ENCODE measurements at regions of chr16 and their contacts with region 1.

Region 1: GRCh38 chr16:24516900-24517669 is 22.3 kb upstream of the RBBP6 start:
- DNase-seq: peak; percentile 39
- ATAC-seq: peak; percentile 60
- H3K4me3 Mint-ChIP-seq: peak overlapping the region; percentile 24
- H3K27ac Mint-ChIP-seq: no peak overlapping the region
- H3K4me1 Mint-ChIP-seq: peaks cover 6% of the 10 kb centered on the region
- H3K27me3 Mint-ChIP-seq: peaks cover 3% of the 10 kb centered on the region
- CTCF ChIP-seq: peak; percentile 82

Region 2: GRCh38 chr16:24497406-24497805 is 19.7 kb before region 1 on chr16:
- CTCF ChIA-PET with region 1: no interaction called
- POLR2A ChIA-PET with region 1: no interaction called
- intact Hi-C with region 1: no loop called
- DNase-seq: no peak
- ATAC-seq: no peak
- H3K4me3 Mint-ChIP-seq: no peak overlapping the region
- H3K27ac Mint-ChIP-seq: no peak overlapping the region
- H3K4me1 Mint-ChIP-seq: no peaks in the 10 kb centered on the region
- H3K27me3 Mint-ChIP-seq: peaks cover 11% of the 10 kb centered on the region
- CTCF ChIP-seq: no peak

Region 3: DNA sequence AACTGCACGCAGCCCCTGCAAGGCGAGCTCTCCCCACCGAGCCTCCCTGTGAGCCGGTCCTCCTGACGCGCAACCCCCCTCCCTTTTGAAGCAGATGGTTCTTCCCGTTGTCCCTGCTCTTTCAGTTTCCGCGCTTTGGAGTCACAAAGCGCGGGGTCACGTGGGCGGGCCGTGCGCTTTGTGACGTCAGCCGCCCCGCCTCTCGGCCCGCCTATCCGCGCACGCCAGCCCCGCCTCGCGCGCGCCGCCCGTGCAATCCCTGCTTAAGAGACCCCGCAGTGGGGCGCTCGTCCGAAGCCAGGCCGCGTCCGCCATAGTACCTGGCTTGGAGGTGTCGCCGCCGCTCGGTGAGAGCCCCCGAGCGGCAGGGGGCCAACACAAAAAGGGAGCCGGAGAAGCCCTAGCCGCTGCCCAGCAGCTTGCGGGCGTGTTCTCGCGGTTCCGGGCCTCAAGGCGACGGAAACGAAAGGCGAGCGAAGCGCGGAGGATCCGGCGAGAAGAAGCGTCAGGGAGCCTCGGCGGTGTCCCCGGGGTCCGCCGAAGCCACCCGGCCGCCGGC is 22.3 kb after region 1 on chr16 and contains the start of gene RBBP6:
- CTCF ChIA-PET with region 1: interaction called, 8 read pairs
- POLR2A ChIA-PET with region 1: no interaction called
- intact Hi-C with region 1: loop called (anchors 2 kb)
- DNase-seq: peak; percentile 96
- ATAC-seq: peak; percentile 92
- H3K4me3 Mint-ChIP-seq: peak within 1 kb of the TSS; percentile 100
- H3K27ac Mint-ChIP-seq: peak within 1 kb of the TSS; percentile 100
- H3K4me1 Mint-ChIP-seq: peaks cover 43% of the 10 kb centered on the region
- H3K27me3 Mint-ChIP-seq: no peaks in the 10 kb centered on the region
- CTCF ChIP-seq: no peak
- total RNA-seq, gene RBBP6: 85.3 and 85.8 TPM in 2 replicates

Region 4: DNA sequence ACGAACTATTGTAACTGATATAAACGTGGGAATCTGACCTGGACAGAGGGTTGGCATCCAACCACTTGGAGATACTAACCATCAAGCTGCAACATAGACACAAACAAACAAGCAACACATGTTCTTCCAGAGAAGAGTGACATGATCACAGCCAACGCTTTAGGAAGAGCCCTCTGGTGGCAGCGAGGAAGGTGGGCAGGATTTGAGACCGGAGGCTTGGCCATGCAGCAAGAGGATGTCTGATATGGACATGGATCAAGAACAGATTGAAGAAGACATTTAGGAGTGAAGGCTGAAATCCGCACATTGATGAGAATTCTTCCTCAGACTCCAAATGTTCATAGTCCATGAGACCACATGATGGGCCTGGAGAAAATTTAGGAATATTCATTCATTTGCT is 172.1 kb after region 1 on chr16:
- CTCF ChIA-PET with region 1: no interaction called
- POLR2A ChIA-PET with region 1: no interaction called
- intact Hi-C with region 1: loop called (anchors 5 kb)
- DNase-seq: no peak
- ATAC-seq: no peak
- H3K4me3 Mint-ChIP-seq: no peak overlapping the region
- H3K27ac Mint-ChIP-seq: no peak overlapping the region
- H3K4me1 Mint-ChIP-seq: no peaks in the 10 kb centered on the region
- H3K27me3 Mint-ChIP-seq: peaks cover 5% of the 10 kb centered on the region
- CTCF ChIP-seq: no peak

Region 5: GRCh38 chr16:25224731-25225319 is 707.7 kb after region 1 on chr16:
- CTCF ChIA-PET with region 1: interaction called, 13 read pairs
- POLR2A ChIA-PET with region 1: no interaction called
- intact Hi-C with region 1: loop called (anchors 1 kb)
- DNase-seq: no peak
- ATAC-seq: no peak
- H3K4me3 Mint-ChIP-seq: no peak overlapping the region
- H3K27ac Mint-ChIP-seq: no peak overlapping the region
- H3K4me1 Mint-ChIP-seq: no peaks in the 10 kb centered on the region
- H3K27me3 Mint-ChIP-seq: no peaks in the 10 kb centered on the region
- CTCF ChIP-seq: no peak